Endothelial cell of umbilical vein (primary cell): ENCODE measurements at regions of chr3 and their contacts with region 1.

Region 1: GRCh38 chr3:101391413-101391950 is 71.1 kb upstream of the IMPG2 start:
- DNase-seq: no peak
- H3K4me3 ChIP-seq: no peak overlapping the region
- H3K27ac ChIP-seq: no peak overlapping the region
- H3K4me1 ChIP-seq: no peaks in the 10 kb centered on the region
- H3K27me3 ChIP-seq: no peaks in the 10 kb centered on the region
- CTCF ChIP-seq: no peak
- POLR2A ChIP-seq: no peak

Region 2: GRCh38 chr3:101095693-101096430 is 295.6 kb before region 1 on chr3:
- CTCF ChIA-PET with region 1: no interaction called
- POLR2A ChIA-PET with region 1: no interaction called
- dilution Hi-C with region 1: no loop called
- intact Hi-C with region 1: loop called (anchors 5 kb)
- DNase-seq: no peak
- H3K4me3 ChIP-seq: no peak overlapping the region
- H3K27ac ChIP-seq: no peak overlapping the region
- H3K4me1 ChIP-seq: no peaks in the 10 kb centered on the region
- H3K27me3 ChIP-seq: no peaks in the 10 kb centered on the region
- CTCF ChIP-seq: no peak
- POLR2A ChIP-seq: no peak

Region 3: DNA sequence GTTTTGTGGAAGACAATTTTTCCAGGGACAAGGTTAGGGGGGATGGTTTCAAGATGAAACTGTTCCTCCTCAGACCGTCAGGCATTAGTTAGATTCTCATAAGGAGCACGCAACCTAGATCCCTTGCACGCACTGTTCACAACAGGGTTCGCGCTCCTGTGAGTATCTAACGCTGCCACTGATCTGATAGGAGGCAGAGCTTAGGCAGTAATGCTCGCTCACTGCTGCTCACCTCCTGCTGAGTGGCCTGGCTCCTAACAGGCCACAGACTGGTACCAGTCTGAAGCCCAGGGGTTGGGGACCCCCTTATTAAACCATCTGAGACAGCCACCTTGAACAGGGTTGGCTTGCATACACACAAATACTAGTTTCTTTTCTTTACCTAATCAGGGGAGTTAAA is 57.6 kb before region 1 on chr3:
- CTCF ChIA-PET with region 1: no interaction called
- POLR2A ChIA-PET with region 1: no interaction called
- dilution Hi-C with region 1: no loop called
- intact Hi-C with region 1: no loop called
- DNase-seq: no peak
- H3K4me3 ChIP-seq: no peak overlapping the region
- H3K27ac ChIP-seq: no peak overlapping the region
- H3K4me1 ChIP-seq: no peaks in the 10 kb centered on the region
- H3K27me3 ChIP-seq: no peaks in the 10 kb centered on the region
- CTCF ChIP-seq: no peak
- POLR2A ChIP-seq: no peak